Transverse colon (tissue), 4 donors: ENCODE measurements at regions of chr1 and their contacts with region 1.

Region 1: DNA sequence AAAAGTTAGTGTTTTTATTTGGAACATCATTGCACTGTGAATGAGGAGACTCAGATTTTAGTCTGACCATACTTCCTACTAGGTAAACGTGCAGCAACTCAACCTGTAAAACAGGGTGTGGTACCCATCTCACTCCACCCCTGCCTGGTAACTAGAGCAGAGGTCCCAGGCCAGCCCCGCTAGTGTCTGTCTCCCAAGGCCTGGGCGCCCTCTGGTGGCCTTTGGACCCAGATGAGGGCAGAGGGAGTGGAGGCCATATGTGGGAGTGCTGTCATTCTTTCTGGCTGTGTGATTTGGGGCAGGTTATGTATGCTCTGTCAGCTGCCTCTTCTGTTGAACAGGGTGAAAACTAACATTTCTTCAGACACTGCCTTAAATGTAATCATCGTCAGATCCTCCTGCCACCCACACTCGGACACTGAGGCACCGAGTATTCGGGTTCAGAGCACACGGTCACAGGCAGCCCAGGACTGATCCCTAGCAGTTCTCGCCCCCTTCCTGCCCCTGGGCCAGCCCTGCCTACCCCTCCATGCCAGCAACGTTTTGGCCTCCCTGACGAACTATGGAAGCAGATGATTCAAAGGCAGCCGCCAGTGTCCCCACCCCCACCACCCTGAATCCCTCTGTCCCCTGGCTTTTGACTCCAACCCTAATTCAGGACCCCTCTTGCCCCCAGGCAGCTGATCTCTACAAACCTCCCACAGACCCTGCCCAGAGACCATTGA is 76.0 kb downstream of the CD247 start:
- DNase-seq: peak; percentile 96
- H3K4me3 ChIP-seq: no peak overlapping the region
- H3K27ac ChIP-seq: peak overlapping the region; percentile 51 to 82 (median 76)
- H3K4me1 ChIP-seq: peaks cover 0 to 21% (median 15%) of the 10 kb centered on the region in 4 donors
- H3K27me3 ChIP-seq: peaks cover 9% of the 10 kb centered on the region
- CTCF ChIP-seq: peak; percentile 82 to 92 (median 85)
- EP300 ChIP-seq: peak; percentile 16
- POLR2A ChIP-seq: no peak

Region 2: DNA sequence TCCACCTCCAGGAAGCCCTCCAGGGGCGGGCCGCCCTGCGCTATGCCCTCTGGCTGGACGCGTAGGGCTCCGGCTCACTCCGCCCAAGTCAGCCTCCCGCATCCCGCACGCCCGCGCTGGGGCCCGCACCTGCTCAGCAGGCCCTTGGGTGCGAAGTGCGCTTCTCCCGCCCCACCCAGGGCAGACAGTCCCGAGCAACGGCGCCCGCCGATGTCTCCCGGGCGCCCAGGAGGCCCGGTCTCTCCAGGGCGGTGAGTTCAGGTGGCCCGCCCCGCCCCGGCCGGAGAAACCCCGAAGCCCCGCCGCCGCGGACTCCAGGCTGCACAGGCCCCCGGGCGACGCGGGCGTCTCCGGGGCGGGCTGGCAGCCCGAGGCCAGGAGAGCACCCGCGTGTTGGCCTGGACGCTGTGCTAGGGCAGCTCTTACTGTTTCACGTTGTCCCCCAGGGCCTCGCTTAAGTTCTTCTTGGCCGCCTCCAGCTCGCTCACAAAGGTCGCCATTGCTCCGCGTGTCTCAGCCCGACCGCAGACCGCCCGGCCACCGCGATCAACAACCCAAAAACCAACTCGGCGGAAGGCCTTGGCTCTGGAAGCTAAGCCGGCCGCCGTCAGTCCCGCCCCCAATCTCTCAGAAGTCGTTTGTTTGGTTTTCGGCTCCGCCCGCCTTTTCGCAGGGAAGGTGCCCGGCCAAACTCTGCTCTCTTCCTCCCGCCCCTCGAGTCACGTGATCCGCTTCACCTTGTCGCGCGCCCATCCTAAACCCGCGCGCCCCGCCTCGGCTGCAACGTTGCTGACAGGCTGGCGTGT is 566.3 kb before region 1 on chr1 and contains the start of gene TADA1:
- in situ Hi-C with region 1: loop called in 1 of 4 experiments (anchors 25 kb)
- intact Hi-C with region 1: no loop called
- DNase-seq: peak; percentile 99
- H3K4me3 ChIP-seq: peak within 1 kb of the TSS; percentile 75 to 95 (median 84)
- H3K27ac ChIP-seq: peak within 1 kb of the TSS; percentile 93 to 99 (median 97)
- H3K4me1 ChIP-seq: peaks cover 8 to 26% (median 20%) of the 10 kb centered on the region in 4 donors
- H3K27me3 ChIP-seq: no peaks in the 10 kb centered on the region
- CTCF ChIP-seq: no peak
- EP300 ChIP-seq: no peak
- POLR2A ChIP-seq: peak; percentile 67
- total RNA-seq, gene TADA1: 1.5 to 21.7 (median 12.0) TPM

Region 3: DNA sequence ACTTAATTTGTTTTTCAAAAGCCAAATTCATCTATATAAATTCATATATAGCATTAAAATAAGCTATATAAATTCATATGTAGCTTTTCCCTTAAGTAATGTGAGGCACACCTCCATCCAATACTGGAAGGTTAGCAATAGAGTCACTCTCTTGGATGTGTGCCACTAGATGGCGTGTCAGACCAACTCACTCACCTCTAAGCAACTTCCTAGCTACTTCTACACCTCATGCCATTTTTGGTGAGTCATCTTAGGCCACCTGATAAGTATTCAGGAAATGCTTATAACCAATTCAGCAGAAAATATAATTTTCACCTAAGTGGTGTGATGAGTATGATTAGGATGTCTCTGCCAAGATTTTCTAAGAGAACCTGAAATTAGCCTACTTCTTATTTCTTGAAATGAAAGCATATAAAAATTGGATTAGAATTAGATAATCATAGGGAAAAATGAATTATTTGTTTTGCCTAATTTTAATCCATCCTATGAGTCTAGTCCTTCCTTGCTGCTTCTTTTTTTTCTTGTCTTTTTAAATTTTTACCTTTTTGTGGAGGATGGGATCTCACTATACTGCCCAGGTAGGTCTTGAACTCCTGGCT is 531.8 kb before region 1 on chr1:
- in situ Hi-C with region 1: loop called in 1 of 4 experiments (anchors 10 kb)
- intact Hi-C with region 1: no loop called
- DNase-seq: peak; percentile 85
- H3K4me3 ChIP-seq: no peak overlapping the region
- H3K27ac ChIP-seq: no peak overlapping the region
- H3K4me1 ChIP-seq: peaks cover 0 to 4% (median 0%) of the 10 kb centered on the region in 4 donors
- H3K27me3 ChIP-seq: no peaks in the 10 kb centered on the region
- CTCF ChIP-seq: peak; percentile 64 to 85 (median 70)
- EP300 ChIP-seq: no peak
- POLR2A ChIP-seq: no peak

Region 4: GRCh38 chr1:167273027-167273800 is 169.1 kb before region 1 on chr1:
- in situ Hi-C with region 1: loop called (anchors 5 to 25 kb)
- intact Hi-C with region 1: loop called (anchors 5 kb)
- DNase-seq: no peak
- H3K4me3 ChIP-seq: no peak overlapping the region
- H3K27ac ChIP-seq: no peak overlapping the region
- H3K4me1 ChIP-seq: peaks cover 0 to 42% (median 18%) of the 10 kb centered on the region in 4 donors
- H3K27me3 ChIP-seq: no peaks in the 10 kb centered on the region
- CTCF ChIP-seq: no peak
- EP300 ChIP-seq: no peak
- POLR2A ChIP-seq: no peak

Region 5: DNA sequence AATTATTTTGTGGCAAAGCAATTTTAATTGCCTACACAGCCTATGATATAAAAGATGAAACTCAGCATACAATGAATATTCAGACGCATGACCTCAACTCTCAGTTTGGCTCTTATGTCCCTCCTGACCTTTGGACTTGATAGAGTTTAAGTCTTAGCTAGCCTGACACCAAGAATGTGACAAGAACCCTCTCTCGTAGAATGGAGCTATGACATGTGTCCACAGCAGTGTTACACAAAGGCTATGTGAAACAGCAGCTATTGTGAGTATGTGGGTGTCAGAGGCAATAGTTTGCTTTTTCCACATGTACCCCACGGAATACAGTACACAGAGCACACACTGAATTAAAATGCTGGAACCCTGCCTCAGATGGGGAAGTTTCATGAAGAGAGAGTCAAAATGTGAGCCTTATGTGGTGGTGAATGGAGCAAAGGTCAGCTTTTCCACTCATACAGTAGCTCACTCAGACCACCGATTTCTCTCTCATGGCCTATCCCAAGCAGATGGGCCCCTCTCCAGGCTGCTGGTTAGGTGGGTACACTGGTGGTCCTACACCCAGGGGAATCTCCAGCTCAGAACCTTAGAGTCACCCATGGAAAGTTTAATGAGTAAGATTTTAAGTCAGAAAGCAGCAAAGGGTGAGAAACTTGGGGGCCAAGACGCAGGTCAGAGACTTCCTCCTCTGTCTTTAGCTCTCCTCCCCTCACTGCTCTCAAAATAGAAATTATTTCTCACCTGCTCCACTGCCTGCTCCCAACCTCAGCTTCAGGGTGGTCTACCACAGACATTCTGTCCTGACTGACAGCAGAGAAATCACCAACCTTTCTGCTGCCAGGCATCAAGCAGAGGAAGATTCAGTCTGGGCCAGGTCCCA is 1111.6 kb after region 1 on chr1:
- in situ Hi-C with region 1: no loop called
- intact Hi-C with region 1: no loop called
- DNase-seq: no peak
- H3K4me3 ChIP-seq: no peak overlapping the region
- H3K27ac ChIP-seq: no peak overlapping the region
- H3K4me1 ChIP-seq: peaks cover 0 to 2% (median 0%) of the 10 kb centered on the region in 4 donors
- H3K27me3 ChIP-seq: no peaks in the 10 kb centered on the region
- CTCF ChIP-seq: no peak
- EP300 ChIP-seq: no peak
- POLR2A ChIP-seq: no peak